H1 (cell line): ENCODE measurements at regions of chr1 and their contacts with region 1.

Region 1: DNA sequence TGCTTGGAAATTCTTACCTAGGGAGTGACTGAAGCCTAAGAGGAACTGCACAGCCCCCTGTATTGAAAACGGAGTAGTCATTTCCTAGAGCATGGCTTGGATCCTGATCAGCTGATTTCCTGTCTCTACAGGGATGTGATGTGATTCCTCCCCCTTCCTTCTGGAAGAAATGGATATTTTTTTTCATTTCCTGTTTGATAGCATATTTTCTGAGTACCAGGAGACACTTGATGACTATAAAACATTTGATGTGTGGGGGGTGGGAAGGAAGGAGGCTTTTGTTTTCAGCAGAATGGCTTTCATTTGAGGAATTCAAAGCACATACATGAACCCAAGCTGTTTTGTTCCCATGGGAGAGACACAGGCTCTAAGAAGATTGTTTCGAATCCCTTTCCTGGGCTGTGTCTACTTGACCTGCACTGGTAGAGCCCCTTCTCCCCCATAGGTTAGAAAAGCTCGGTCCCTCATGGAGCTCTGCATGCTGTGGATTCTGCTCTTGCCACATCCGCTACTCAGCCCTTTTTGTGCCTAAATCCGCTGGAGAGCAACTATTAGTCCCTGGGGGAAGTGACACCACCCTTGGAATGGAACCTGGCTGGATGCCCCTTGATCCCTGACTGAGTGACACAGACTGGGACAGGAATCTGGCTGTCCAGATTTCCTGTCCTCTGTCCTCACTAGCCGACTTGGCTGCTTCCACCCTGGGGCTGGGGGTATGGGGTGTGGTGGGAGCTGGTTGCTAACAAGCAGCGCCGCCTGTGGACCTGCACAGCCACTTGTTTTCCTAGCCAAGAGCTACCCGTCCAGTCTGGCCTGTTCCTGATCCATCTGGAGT is 71.8 kb upstream of the MACF1 start:
- DNase-seq: peak; percentile 65 to 78
- H3K4me3 ChIP-seq: peak overlapping the region in 1 of 4 experiments; percentile 23; a peak in 1 of 8 replicates
- H3K27ac ChIP-seq: peak overlapping the region; percentile 84
- H3K4me1 ChIP-seq: peaks cover 6 to 33% (median 21%) of the 10 kb centered on the region in 4 experiments
- H3K27me3 ChIP-seq: no peaks in the 10 kb centered on the region
- CTCF ChIP-seq: peak; percentile 39 to 74 (median 57)
- EP300 ChIP-seq: peak in 1 of 2 experiments; percentile 88; a peak in 1 of 3 replicates
- POLR2A ChIP-seq: peak in 1 of 2 experiments; percentile 29; a peak in 1 of 3 replicates
- RAD21 ChIP-seq: peak; percentile 50 to 58

Region 2: DNA sequence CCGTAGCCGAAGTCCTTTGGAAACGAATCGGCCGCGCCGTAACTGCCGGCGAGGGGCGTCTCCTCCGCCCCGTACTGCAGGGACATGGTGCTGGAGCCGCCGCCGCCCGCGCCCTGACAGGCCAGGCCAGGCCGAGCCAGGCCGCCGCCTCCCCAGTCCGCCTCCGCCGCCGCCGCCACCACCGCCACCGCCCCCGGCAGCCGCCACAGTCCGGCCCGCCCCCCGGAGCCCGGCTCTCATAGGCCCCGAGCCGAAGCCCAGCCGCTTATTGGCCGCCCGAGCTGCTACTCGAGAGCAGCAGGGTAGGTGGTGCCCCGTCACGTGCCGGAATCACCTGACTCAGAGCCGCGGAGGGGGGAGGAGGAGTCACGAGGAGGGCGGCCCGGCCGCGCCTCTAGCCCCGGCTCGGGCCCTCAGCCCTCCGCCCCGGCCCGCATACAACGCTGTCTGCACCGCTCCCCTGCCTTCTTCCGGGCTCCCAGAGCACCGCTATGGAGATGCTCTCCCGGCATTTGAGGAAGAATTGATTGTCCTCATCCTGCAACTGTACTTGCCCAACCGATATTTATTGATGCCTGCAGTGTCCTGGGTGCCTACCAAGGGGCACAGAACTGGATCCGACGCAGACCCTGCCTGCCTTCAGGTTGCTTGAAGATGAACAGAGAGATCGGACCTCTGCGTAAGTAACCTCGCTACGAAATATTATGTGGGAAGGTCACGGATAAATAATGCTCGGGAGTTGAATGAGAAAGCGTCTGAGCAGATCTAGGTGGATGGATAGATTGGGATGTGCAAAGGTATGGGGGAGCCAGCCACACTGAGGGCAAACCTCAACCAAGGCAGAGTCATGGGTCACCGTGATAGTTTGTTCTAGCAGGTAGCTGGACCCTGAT is 272.9 kb before region 1 on chr1 and contains the start of gene RRAGC:
- CTCF ChIA-PET with region 1: no interaction called
- POLR2A ChIA-PET with region 1: no interaction called
- DNase-seq: peak; percentile 90 to 97
- H3K4me3 ChIP-seq: peak within 1 kb of the TSS; percentile 85 to 96 (median 92)
- H3K27ac ChIP-seq: no peak within 1 kb of the TSS
- H3K4me1 ChIP-seq: peaks cover 0 to 8% (median 2%) of the 10 kb centered on the region in 4 experiments; a peak in 3 of 7 replicates
- H3K27me3 ChIP-seq: no peaks in the 10 kb centered on the region
- CTCF ChIP-seq: no peak
- EP300 ChIP-seq: no peak
- POLR2A ChIP-seq: 0 out of 3 replicates have a peak, but pooled peaks of 1 of the 2 experiments have one; percentile 21
- RAD21 ChIP-seq: no peak
- total RNA-seq, gene RRAGC: 16.5 and 18.1 TPM in 2 replicates

Region 3: GRCh38 chr1:39081266-39082009 is 51.3 kb before region 1 on chr1:
- CTCF ChIA-PET with region 1: no interaction called
- POLR2A ChIA-PET with region 1: no interaction called
- DNase-seq: peak in 1 of 2 experiments; percentile 77
- H3K4me3 ChIP-seq: peak overlapping the region; percentile 50 to 72 (median 56)
- H3K27ac ChIP-seq: no peak overlapping the region
- H3K4me1 ChIP-seq: peaks cover 6 to 10% (median 6%) of the 10 kb centered on the region in 4 experiments
- H3K27me3 ChIP-seq: peaks cover 0 to 12% (median 8%) of the 10 kb centered on the region in 4 experiments; a peak in 6 of 7 replicates
- CTCF ChIP-seq: no peak
- EP300 ChIP-seq: no peak
- POLR2A ChIP-seq: no peak; a peak in 1 of 3 replicates
- RAD21 ChIP-seq: no peak; a peak in 1 of 4 replicates

Region 4: DNA sequence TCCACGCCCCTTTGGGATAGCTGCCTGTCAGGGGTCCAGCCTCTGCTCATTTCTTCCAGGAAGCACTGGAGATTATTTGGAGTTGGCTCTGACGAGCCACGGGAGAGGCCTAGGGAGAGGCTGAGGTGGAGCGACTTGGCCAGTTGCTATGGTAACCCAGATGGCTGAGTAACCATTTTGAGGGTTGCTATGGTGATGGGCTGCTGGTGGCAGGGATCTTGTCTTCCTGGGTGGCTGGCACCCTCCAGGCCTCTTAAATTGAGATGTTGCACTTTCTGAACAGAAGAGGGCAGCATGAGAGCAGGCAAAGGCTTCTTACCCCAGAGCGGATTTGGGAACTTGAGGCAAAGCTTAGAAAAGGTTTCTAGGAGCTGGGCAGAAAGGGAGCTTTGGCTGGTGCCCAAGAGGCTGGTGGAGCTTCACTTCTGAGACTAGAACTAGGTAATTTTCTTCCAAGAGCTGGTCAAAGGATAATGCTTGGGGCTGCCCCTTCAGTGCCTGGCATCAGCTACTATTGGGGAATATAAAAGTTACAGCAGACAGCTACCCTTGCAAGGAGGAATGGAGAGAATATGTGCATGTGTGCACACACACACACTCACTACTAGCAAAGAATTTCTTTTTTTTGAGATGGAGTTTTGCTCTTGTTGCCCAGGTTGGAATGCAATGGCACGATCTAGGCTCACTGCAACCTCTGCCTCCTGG is 34.0 kb before region 1 on chr1:
- CTCF ChIA-PET with region 1: interaction called, 26 read pairs
- POLR2A ChIA-PET with region 1: interaction called, 23 read pairs
- DNase-seq: peak; percentile 75 to 89
- H3K4me3 ChIP-seq: no peak overlapping the region
- H3K27ac ChIP-seq: peak overlapping the region; percentile 21; the same call in 1 of the 2 replicates
- H3K4me1 ChIP-seq: peaks cover 7 to 13% (median 12%) of the 10 kb centered on the region in 4 experiments
- H3K27me3 ChIP-seq: no peaks in the 10 kb centered on the region
- CTCF ChIP-seq: peak; percentile 40 to 88 (median 88)
- EP300 ChIP-seq: peak in 1 of 2 experiments; percentile 39; a peak in 1 of 3 replicates
- POLR2A ChIP-seq: no peak
- RAD21 ChIP-seq: peak; percentile 98 to 99

Region 5: DNA sequence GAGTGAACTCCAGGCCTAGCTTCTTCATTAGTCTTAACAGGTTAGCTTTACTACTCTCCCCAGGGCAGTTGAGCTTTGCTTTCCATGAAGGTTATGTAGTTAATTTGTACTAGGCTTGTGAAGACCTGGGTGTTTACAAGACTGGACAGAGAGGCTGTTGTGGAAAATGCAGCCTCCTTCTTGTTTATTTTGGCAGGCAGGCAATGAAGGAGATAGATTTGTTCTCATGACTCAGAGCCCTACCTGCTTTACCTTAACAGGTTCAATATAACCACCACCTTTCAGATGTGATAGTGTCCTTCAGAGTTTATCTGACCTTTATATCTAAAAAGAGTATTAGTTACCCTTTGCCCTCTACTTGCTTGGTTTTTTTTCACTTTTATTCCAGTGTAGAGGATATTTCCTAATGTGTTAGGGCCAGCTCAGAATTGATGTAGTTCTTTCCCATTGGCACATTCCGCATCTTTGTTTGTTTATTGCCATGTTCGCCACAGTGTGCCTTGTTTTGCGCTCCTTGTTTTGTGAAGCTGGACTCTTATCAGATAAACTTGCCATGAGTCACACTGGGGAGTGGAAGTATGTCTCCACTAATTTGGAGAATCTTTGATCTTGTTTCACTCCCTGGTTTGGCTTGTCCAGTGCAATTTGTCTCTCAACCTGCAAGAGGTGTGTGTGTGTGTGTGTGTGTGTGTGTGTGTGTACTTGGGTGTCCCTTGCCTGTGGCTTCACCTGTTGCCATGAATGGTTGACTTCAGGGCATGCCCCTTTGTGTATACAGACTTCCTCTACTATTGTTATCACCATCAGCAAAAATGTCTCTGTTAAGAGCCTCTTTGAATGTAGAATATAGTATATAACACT is 15.6 kb before region 1 on chr1:
- CTCF ChIA-PET with region 1: interaction called, 21 read pairs
- POLR2A ChIA-PET with region 1: interaction called, 71 read pairs
- DNase-seq: no peak
- H3K4me3 ChIP-seq: no peak overlapping the region
- H3K27ac ChIP-seq: no peak overlapping the region
- H3K4me1 ChIP-seq: peaks cover 0 to 3% (median 2%) of the 10 kb centered on the region in 4 experiments; a peak in 5 of 7 replicates
- H3K27me3 ChIP-seq: no peaks in the 10 kb centered on the region
- CTCF ChIP-seq: no peak
- EP300 ChIP-seq: no peak
- POLR2A ChIP-seq: no peak
- RAD21 ChIP-seq: no peak

Region 6: DNA sequence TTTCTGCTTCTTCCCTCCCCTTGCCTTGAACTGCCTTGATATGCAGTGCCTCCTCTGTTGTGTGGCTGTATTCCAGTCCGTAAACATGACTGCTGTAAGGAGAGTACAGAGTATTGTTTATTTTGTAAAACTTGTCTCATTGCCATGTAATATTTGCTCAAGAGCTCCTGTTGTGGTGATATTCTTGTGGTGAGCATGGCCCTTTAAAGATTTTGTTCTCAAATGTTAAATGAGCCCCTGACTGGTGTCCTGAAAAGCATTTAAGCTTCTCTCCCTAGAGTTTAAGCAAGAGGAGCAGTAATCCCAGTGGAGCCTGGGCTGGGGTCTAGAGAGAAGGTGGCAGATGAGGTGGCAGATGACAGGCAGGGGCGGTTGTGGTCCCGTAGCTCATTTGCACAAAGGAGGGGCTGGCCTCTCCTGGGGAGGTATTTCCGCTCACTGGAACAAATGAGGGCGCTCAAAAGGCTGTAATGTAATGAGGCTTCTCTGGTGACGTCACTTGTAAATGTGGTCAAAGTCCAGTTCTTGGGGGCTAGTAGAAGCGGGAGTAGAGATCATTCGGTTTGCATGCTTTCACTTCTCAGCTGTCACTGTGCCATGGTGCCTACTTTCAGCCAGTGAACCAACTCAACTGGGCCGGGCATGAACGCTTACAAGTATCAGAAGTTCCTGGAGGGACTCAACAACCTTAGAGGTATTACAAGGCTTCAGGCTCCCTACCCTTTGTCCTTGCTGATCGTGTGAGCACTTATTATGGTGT is 25.8 kb after region 1 on chr1:
- CTCF ChIA-PET with region 1: interaction called, 60 read pairs
- POLR2A ChIA-PET with region 1: interaction called, 18 read pairs
- DNase-seq: no peak
- H3K4me3 ChIP-seq: peak overlapping the region; percentile 21 to 44 (median 34); a peak in 7 of 8 replicates
- H3K27ac ChIP-seq: peak overlapping the region; percentile 48
- H3K4me1 ChIP-seq: peaks cover 13 to 37% (median 25%) of the 10 kb centered on the region in 4 experiments; a peak in 6 of 7 replicates
- H3K27me3 ChIP-seq: no peaks in the 10 kb centered on the region
- CTCF ChIP-seq: peak in 1 of 3 experiments; percentile 1; a peak in 1 of 4 replicates
- EP300 ChIP-seq: no peak
- POLR2A ChIP-seq: peak in 1 of 2 experiments; percentile 62; a peak in 1 of 3 replicates
- RAD21 ChIP-seq: no peak

Region 7: DNA sequence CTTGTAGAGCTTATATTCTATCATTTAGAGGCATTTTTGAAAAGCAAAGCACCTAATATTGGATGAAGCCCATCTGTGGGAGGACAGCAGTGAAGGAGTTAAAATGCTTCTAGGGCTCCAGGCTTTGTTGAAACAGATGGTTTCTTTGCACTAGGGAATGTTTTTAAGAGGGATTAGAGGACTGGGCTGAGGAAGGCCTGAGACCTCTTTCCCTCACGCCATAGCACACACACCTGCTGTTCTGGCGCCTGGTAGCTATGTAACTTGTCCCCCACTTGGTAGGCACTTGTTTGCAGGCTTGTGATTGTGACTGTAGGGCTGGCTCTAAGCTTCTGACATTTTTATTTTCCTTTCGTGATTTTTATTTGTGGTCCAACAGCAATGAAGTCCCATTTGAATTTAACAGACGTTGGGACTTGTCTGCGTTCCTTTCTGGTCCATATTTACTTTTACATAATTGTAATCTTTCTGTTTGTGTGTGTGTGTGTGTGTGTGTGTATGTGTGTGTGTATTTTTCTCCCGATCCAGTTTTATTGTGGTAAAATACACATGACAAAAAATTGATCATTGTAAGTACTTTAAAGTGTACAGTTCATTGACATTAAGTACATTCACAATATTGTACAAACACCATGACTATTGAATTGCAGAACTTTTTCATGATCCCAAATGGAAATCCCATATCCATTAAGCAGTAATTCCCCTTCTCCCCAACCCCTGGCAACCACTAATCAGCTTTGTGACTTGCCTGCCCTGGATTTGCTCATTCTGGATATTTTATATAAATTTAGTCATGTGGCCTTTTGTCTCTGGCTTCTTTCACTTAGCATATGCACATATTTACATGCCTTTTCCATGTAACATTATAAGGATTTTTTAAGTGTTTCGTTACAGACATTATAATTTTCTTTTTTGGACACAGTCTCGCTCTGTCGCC is 38.3 kb after region 1 on chr1:
- CTCF ChIA-PET with region 1: interaction called, 21 read pairs
- POLR2A ChIA-PET with region 1: interaction called, 10 read pairs
- DNase-seq: no peak
- H3K4me3 ChIP-seq: no peak overlapping the region
- H3K27ac ChIP-seq: peak overlapping the region; percentile 8; the same call in 1 of the 2 replicates
- H3K4me1 ChIP-seq: peaks cover 3 to 21% (median 16%) of the 10 kb centered on the region in 4 experiments; a peak in 6 of 7 replicates
- H3K27me3 ChIP-seq: no peaks in the 10 kb centered on the region
- CTCF ChIP-seq: no peak
- EP300 ChIP-seq: peak in 1 of 2 experiments; percentile 64; a peak in 1 of 3 replicates
- POLR2A ChIP-seq: peak in 1 of 2 experiments; percentile 34; a peak in 1 of 3 replicates
- RAD21 ChIP-seq: peak in 1 of 2 experiments; percentile 18; a peak in 1 of 4 replicates

Region 8: GRCh38 chr1:39258146-39258924 is 125.6 kb after region 1 on chr1:
- CTCF ChIA-PET with region 1: interaction called, 13 read pairs
- POLR2A ChIA-PET with region 1: interaction called, 3 read pairs
- DNase-seq: peak; percentile 47 to 89
- H3K4me3 ChIP-seq: no peak overlapping the region
- H3K27ac ChIP-seq: no peak overlapping the region
- H3K4me1 ChIP-seq: peaks cover 0 to 2% (median 0%) of the 10 kb centered on the region in 4 experiments; a peak in 1 of 7 replicates
- H3K27me3 ChIP-seq: no peaks in the 10 kb centered on the region
- CTCF ChIP-seq: peak; percentile 65 to 95 (median 89)
- EP300 ChIP-seq: no peak
- POLR2A ChIP-seq: no peak
- RAD21 ChIP-seq: peak; percentile 98 to 99